K562 (cell line): ENCODE measurements at regions of chr7 and their contacts with region 1.

Region 1: GRCh38 chr7:23000597-23001360 is 13.2 kb downstream of the HYCC1 start:
- DNase-seq: no peak
- ATAC-seq: no peak
- H3K4me3 ChIP-seq: no peak overlapping the region
- H3K27ac ChIP-seq: no peak overlapping the region
- H3K4me1 ChIP-seq: no peaks in the 10 kb centered on the region
- H3K27me3 ChIP-seq: no peaks in the 10 kb centered on the region
- CTCF ChIP-seq: no peak
- EP300 ChIP-seq: no peak
- POLR2A ChIP-seq: no peak
- RAD21 ChIP-seq: no peak

Region 2: DNA sequence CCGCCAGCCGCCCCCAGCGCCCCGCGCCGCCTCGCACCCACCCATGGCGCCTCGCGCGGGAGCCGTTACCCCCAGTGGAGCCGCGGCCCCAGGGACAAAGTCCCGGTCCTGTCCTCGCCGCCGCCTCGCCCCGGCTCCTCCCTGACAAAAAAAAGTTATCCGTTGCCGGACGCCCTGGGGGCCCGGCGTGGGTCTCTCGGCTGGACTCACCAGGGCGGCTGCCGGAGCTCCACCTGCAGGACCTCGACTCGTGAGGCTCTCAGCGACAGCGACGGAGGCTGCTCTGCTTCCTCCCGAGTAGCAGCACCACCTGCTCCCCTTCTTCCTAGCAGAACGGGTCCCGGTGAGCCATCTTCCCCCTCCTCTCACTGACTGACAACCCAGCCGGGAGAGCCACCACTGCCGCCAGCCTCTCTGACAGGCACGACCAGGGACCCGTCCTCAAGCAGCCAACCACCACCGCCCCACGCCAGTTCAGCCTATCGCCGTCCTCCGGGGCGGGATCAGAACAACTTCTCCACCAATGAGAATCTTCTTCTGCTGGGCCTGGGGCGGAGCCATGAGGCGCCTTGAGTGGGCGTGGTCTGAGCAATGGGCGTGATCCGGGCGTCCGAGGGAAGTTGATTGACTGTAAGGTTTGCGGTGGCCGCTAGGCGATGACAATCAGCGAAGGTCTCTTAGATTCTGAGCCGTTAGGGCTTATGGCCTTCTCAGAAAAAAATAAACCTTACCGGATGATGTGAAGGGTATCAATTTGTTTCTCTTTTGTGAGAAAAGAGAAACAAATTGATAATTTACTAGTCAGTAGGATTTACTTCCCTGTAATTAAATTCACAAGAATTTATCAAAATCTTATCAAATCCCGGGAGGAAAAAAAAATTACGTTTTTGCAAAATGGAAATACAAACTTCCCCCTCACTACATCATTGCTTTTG is 13.2 kb after region 1 on chr7 and contains the start of gene HYCC1:
- CTCF ChIA-PET with region 1: no interaction called
- POLR2A ChIA-PET with region 1: interaction called, 12 read pairs
- in situ Hi-C with region 1: no loop called
- intact Hi-C with region 1: no loop called
- DNase-seq: peak; percentile 98 to 99 (median 98)
- ATAC-seq: peak; percentile 98
- H3K4me3 ChIP-seq: peak within 1 kb of the TSS; percentile 83
- H3K27ac ChIP-seq: peak within 1 kb of the TSS; percentile 71
- H3K4me1 ChIP-seq: peaks cover 13 to 39% of the 10 kb centered on the region in 2 experiments; a peak in 4 of 5 replicates
- H3K27me3 ChIP-seq: no peaks in the 10 kb centered on the region
- CTCF ChIP-seq: peak; percentile 32 to 70 (median 58); a peak in 5 of 6 replicates
- EP300 ChIP-seq: no peak
- POLR2A ChIP-seq: peak; percentile 94
- RAD21 ChIP-seq: peak in 1 of 2 experiments; percentile 17; a peak in 2 of 4 replicates
- polyA plus RNA-seq, gene HYCC1: 11.2 to 16.0 TPM